Calu3 (cell line): ENCODE measurements at regions of chr2 and their contacts with region 1.

Region 1: DNA sequence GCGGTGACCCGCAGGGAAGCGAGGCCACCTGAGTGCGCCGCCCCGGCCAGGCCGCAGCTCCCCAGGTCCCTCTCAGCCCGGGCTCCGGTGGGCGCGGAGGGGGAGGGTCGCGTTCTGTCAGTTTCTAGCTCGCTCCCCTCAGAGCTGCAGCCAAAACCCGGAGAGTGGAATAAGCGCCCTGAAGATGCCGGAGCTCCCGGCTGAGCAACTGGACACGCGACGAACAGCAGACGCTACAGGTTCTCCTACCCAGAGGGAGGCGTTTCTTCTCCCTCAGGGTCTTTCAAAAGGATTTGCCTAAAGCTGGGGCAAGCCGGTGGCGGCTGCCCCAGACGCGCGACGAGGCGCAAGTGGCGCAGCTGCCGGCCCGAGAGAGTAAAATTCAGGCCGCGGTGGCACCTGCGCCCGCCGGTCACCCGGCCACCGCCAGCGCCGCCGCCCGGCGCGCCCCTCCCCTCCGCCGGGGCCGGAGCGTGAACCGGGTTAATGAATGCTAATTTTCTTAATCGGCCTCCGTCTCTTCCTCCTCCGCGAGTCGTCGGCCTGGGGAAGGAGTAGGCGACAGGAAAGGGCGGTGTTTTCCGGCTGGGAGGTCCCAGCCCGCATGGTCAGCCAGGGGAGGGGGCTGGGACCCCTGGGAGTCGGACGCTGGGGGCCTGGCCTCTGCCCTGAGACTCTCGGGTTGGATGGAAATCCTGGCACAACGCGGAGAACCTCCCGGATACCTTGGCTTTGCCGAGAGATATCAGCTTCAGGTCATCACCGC is 845 bp upstream of the CDC42EP3 start:
- DNase-seq: peak; percentile 83
- H3K4me3 Mint-ChIP-seq: peak overlapping the region; percentile 95
- H3K27ac Mint-ChIP-seq: peak overlapping the region; percentile 19
- H3K4me1 Mint-ChIP-seq: peaks cover 59% of the 10 kb centered on the region
- H3K27me3 Mint-ChIP-seq: no peaks in the 10 kb centered on the region
- CTCF ChIP-seq: no peak

Region 2: GRCh38 chr2:37585982-37586621 is 86.2 kb before region 1 on chr2:
- CTCF ChIA-PET with region 1: no interaction called
- intact Hi-C with region 1: loop called (anchors 2 kb)
- DNase-seq: no peak
- H3K4me3 Mint-ChIP-seq: peak overlapping the region; percentile 21
- H3K27ac Mint-ChIP-seq: peak overlapping the region; percentile 81
- H3K4me1 Mint-ChIP-seq: peaks cover 80% of the 10 kb centered on the region
- H3K27me3 Mint-ChIP-seq: no peaks in the 10 kb centered on the region
- CTCF ChIP-seq: no peak